HEK293 (cell line): ENCODE measurements at regions of chr18 and their contacts with region 1.

Region 1: DNA sequence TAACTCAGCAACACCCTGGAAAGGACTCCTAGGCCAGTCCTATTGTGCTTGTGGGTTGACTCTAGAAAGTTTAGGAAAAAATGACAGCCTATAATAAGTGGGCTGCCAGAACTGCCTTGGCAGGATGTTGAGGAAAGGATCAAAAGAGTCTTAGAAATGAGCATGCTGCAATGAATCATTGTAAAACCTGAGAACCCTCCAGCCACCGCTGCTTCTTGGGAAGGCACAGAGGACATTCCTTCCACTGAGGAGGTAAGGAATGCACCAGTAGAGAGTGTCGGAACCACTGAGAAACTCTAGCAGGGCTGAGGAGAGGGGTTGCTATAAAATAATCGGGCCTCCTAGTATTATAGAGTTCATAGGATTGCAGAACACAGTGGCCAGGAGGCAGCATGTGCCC is 146.7 kb upstream of the SMIM21 start:
- H3K4me3 ChIP-seq: no peak overlapping the region
- H3K27ac ChIP-seq: no peak overlapping the region
- H3K4me1 ChIP-seq: no peaks in the 10 kb centered on the region
- CTCF ChIP-seq: no peak

Region 2: GRCh38 chr18:75210274-75211001 is 363.7 kb before region 1 on chr18 and contains the start of gene TSHZ1:
- CTCF ChIA-PET with region 1: no interaction called
- POLR2A ChIA-PET with region 1: interaction called, 12 read pairs
- H3K4me3 ChIP-seq: peak within 1 kb of the TSS; percentile 91
- H3K27ac ChIP-seq: peak within 1 kb of the TSS; percentile 99
- H3K4me1 ChIP-seq: peaks cover 37% of the 10 kb centered on the region
- CTCF ChIP-seq: no peak